Naive thymus-derived CD8-positive, alpha-beta T cell (primary cell): ENCODE measurements at regions of chr2 and their contacts with region 1.

Region 1: DNA sequence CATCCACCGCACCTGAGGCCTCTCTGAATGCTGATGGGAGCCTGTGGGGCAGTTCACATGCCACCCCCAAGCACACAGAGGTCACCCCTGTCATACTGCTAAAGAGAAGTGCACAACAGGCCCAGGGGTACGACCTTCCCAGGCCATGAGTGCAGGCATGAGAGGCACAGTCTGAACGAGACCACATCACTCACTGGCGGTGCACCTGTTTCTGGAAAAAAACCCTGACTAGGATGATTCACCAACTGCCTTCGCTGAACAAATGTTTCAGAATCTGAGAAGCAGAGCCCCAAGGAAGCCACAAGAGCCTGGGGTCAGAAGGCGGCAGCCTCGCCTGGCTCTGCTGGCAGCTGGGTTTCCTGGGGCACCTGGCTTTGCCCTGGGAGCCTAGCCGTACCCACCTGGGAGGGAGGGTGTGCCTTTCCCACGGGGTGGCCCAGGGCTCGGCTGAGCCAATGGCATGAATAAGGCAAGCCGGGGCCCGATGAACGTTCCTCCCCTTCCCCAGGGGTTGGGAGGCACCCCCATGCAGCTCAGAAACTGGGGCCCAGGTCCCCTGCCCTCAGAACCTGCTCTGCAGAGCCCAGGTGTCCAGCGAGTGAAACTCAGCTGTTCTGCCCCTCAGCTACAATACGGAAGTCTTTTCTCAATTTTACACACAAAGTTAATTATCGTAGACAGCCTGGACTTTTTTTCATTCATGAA is 73.8 kb downstream of the HDAC4 start:
- DNase-seq: peak; percentile 46 to 82 (median 66)
- ATAC-seq: peak; percentile 71 to 81
- H3K4me3 Mint-ChIP-seq: peak overlapping the region; percentile 25 to 79 (median 68)
- H3K27ac Mint-ChIP-seq: peak overlapping the region; percentile 87 to 95 (median 92)
- H3K4me1 Mint-ChIP-seq: peaks cover 44 to 88% (median 82%) of the 10 kb centered on the region in 4 donors
- H3K27me3 Mint-ChIP-seq: no peaks in the 10 kb centered on the region

Region 2: DNA sequence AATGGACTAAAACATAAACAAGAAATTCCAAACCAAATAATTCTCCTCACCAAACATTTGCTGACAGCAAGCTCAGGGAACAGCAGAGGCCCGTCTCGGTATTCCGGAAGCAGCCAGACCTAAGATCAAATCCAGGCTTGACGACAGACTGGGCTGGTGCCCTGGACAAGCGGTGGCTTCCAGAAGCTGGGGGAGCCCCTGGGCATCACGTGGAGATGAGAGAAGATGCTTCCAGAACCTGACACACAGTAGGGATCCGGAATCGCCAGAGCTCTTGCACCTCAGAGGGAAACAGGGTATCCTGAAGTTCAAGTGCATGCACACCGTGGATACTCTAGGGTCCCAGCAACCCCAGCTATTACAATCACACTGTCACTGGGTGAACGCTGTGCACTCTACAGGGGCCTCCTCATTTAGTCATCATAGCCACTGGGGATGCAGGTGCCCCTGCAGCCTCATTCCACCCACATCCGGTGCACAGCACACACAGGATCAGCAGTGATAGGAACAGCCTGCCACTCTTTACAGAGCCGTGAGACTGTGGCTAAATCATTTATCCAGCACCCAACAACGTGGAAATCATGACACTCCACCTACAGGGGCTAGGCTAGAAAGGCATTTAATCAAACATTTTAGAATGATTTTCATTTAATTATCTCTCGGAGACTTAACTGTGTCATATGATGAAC is 28.7 kb before region 1 on chr2:
- POLR2A ChIA-PET with region 1: interaction called, 98 read pairs
- DNase-seq: peak; percentile 49 to 87 (median 74)
- ATAC-seq: peak; percentile 82 to 83
- H3K4me3 Mint-ChIP-seq: peak overlapping the region; percentile 79 to 94 (median 92)
- H3K27ac Mint-ChIP-seq: peak overlapping the region; percentile 89 to 99 (median 96)
- H3K4me1 Mint-ChIP-seq: peaks cover 50 to 83% (median 81%) of the 10 kb centered on the region in 4 donors
- H3K27me3 Mint-ChIP-seq: no peaks in the 10 kb centered on the region

Region 3: DNA sequence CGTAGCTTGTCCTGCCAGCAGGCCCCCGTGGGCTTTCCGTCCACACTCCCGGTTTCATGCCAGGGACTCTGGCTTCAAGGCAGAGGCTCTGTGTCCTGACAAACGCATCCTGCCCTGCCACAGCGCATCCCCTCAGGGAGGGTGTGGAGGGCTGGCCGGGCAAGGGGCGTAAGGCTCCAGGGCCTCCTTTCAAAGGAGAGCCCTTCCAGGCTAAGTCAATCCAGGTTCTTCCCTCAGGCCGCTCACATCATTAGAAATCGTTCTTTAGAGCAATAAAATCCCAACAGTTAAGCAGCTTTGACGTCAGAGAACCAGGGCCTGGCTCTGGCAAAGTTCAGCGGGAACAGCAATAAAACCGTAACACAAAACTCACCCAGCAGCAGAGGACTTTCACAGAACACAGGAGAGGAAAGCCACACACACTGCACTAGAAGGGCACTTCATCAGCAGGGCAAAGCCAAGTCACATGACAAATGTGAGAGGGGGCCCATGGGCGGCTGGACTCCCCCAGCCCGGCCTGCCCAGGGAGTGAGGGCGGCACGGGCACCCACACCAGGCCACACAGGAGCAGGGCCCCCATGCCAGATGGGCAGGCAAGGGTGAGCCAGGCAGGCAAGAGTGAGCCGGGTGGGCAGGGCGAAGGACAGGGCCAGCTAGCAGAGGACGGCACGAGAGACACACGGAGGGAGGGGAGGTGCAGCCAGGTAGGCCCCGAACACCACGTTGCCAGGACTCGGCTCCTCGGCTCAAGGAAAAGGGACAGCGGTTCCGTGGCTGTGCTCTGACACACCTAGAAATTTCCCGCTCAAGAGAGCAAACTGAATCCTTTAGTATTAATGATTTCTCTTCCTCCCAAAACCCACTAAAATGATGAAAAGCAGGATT is 21.8 kb after region 1 on chr2:
- POLR2A ChIA-PET with region 1: no interaction called
- DNase-seq: no peak
- ATAC-seq: no peak
- H3K4me3 Mint-ChIP-seq: no peak overlapping the region
- H3K27ac Mint-ChIP-seq: peak overlapping the region in 4 of 10 donors; percentile 37 to 66 (median 48)
- H3K4me1 Mint-ChIP-seq: peaks cover 0 to 8% (median 5%) of the 10 kb centered on the region in 4 donors
- H3K27me3 Mint-ChIP-seq: no peaks in the 10 kb centered on the region